Activated CD4-positive, alpha-beta T cell treated with anti-CD3 and anti-CD28 coated beads, Interleukin-2, amount 10 ng/mL, durations not matched to agents 24 days and 14 days (primary cell): ENCODE measurements at regions of chr6 and their contacts with region 1.

Region 1: DNA sequence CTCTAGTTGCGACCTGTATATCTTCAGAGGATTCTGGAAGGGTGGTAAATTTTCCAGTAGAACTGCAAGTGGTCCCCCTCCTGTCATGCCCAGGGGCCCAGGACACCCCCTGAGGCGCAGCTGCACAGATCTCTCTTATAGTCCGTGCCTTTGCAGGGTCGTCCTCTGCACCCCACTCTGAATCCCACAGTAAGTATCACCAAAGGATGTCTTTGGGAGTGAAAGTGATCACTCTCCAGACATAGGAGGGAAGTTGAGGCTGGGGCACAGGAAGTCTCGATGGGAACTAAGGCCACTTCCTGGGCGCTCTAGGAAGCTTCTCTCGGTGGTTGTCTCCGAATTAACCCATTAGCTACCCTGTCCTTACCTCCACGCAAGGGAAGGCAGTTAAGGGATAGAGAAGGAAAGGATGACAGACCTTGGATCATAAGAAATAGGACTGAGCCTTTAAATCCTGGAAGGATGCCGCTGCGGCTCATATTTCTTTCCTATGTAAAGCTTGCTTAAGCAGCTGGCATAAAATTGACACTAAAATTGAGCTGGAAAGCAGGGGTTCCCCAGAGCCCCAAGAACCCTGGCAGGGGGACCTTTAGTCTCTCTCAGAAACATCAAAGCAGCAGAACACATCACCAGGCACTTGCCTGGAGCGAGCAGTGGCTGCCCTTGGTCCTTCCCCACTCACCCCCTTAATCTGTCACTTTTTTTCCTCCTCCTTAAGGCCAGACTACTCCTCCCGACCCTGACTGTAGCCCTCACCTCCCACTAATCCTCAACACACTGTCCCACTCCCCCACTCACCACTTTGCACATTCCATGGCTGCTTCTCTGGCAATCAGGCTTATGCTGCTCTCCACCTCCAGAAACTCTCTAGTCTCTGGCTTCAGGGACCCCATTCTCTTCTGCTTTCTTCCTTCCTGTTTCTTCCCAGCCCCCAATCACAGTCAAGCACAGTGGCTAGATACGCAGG is at the start of gene ZKSCAN4:
- DNase-seq: peak; percentile 95
- H3K4me3 Mint-ChIP-seq: peak within 1 kb of the TSS; percentile 97
- H3K27ac Mint-ChIP-seq: peak within 1 kb of the TSS; percentile 89
- H3K4me1 Mint-ChIP-seq: peaks cover 19% of the 10 kb centered on the region
- H3K27me3 Mint-ChIP-seq: no peaks in the 10 kb centered on the region
- total RNA-seq, gene ZKSCAN4: 3.8 and 4.9 TPM in 2 replicates

Region 2: DNA sequence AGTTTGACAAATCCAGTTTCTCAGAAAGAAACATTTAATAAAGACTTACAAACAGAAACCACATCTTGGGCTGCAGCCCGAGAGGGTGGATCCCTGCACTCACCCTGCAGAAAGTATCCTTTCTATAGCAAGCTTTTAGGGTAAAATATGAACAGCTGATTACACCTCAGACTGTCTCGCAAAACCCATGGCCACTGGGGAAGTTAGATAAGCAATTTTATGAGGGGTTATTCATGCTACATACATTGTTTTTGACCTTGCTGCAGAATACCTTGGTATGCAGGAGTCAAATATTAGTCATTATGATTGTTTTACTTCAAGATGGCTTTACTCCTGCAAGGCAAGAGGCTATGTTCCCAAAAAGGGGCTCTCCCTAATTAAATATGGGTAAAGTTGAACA is 467.0 kb before region 1 on chr6:
- intact Hi-C with region 1: no loop called
- DNase-seq: no peak
- H3K4me3 Mint-ChIP-seq: no peak overlapping the region
- H3K27ac Mint-ChIP-seq: no peak overlapping the region
- H3K4me1 Mint-ChIP-seq: peaks cover 2% of the 10 kb centered on the region
- H3K27me3 Mint-ChIP-seq: peaks cover 32% of the 10 kb centered on the region

Region 3: DNA sequence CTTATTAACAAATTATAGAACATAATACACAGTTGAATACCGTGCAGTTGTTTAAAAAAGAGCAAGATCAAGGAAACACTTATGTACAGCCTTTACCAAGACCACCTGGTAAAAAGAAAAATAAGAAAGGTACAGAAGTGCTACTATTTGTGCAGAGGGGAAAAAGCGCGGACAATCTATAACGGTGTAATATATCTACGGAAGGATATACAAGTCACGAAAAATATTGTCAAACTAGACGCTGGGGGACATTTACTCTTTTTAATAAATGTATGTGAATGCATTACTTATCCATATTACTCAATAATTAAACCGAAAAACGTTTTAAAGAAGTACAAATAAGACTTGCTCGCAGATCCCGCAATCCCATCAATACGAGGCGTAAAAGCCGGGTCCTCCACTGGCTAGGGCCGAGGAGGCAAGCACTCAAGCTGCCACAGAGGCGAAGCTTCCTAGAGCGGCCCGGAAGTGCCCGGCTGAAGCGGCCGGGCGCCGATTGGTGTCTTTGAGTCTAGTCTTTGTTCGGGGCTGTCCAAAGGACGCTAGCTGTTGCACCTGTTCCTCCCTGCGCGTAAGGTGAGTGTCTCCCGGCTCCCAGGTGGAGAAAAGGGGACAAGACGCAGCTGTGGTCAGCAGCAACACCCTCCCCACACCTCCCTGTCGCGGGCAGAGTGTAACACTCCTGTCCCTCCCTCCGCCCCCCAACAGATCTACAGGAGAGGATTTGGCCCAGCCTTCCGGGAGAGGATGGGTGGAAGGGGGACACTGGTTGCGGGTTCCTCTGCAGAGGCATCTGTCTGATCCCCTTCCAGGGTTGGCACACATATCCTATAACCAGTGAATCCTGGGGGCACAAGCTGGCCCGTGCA is 128.0 kb before region 1 on chr6 and contains the start of gene ZSCAN16:
- intact Hi-C with region 1: loop called (anchors 5 kb)
- DNase-seq: peak; percentile 92
- H3K4me3 Mint-ChIP-seq: peak within 1 kb of the TSS; percentile 95
- H3K27ac Mint-ChIP-seq: peak within 1 kb of the TSS; percentile 83
- H3K4me1 Mint-ChIP-seq: peaks cover 48% of the 10 kb centered on the region
- H3K27me3 Mint-ChIP-seq: no peaks in the 10 kb centered on the region
- total RNA-seq, gene ZSCAN16: 3.0 and 4.0 TPM in 2 replicates

Region 4: GRCh38 chr6:28218271-28219248 is 33.7 kb before region 1 on chr6:
- intact Hi-C with region 1: loop called (anchors 5 kb)
- DNase-seq: peak; percentile 68
- H3K4me3 Mint-ChIP-seq: peak overlapping the region; percentile 82
- H3K27ac Mint-ChIP-seq: no peak overlapping the region
- H3K4me1 Mint-ChIP-seq: peaks cover 10% of the 10 kb centered on the region
- H3K27me3 Mint-ChIP-seq: peaks cover 67% of the 10 kb centered on the region

Region 5: GRCh38 chr6:28281288-28282064 is 29.2 kb after region 1 on chr6 and contains the start of gene PGBD1:
- intact Hi-C with region 1: loop called (anchors 1 kb)
- DNase-seq: peak; percentile 86
- H3K4me3 Mint-ChIP-seq: peak within 1 kb of the TSS; percentile 88
- H3K27ac Mint-ChIP-seq: no peak within 1 kb of the TSS
- H3K4me1 Mint-ChIP-seq: peaks cover 13% of the 10 kb centered on the region
- H3K27me3 Mint-ChIP-seq: peaks cover 2% of the 10 kb centered on the region
- total RNA-seq, gene PGBD1: 1.8 and 2.5 TPM in 2 replicates